Heart right ventricle (tissue), 16 donors: ENCODE measurements at regions of chr6 and their contacts with region 1.

Region 1: DNA sequence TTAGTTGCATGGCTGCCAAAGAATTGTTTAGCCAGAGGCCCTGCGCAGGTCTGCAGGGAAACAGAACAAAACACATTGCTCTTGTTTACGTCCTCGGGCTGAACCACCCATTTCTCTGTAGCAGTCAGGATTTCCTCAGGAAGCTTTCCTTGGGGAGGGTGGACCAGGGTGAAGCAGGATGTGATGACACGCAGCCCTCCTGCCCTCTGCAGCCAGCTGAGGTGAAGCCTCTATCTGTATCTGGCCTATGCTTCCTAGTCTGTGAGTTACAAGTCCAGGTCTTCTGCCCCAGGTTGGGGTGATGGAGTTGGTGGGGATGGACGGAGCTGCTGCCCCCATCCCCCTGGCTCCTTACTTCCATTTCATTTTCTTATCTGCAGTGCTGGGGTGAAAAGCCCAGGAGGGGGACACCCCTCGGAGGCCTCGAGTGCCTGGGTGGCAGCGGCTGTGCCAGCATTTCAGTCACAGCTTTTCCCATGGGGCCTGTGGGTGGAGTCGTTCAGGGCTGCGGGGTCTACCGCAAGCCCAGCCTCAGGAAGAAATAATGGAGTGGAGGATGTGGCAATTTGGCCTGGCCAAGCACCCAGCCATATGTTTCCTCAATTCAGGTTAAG is 24.9 kb downstream of the SASH1 start:
- DNase-seq: peak; percentile 61 to 85
- ATAC-seq: peak; percentile 83 to 95 (median 93)
- H3K4me3 ChIP-seq: peak overlapping the region in 1 of 10 donors; percentile 4
- H3K27ac ChIP-seq: peak overlapping the region; percentile 73 to 94 (median 86)
- H3K4me1 ChIP-seq: peaks cover 5 to 100% (median 69%) of the 10 kb centered on the region in 9 donors
- H3K27me3 ChIP-seq: no peaks in the 10 kb centered on the region
- CTCF ChIP-seq: peak in 1 of 9 donors; percentile 16

Region 2: DNA sequence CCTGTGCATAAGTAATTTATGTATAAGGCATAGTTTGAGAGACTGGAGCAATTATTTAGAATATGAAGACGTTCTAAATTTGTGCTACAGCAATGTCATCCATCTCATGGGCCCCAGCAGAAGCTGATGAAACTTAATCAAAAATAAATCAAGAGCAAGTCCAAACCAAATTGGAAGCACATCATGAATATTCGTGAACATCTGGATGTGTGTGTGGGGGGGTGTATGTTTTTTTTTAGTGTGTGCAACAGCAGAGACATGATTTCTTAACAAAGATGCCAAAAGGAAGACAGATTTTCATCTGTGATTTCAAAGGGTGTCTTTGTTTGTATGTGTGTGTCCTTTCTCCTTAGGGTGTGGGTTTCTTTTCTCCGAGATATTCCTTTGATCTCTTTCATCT is 34.1 kb after region 1 on chr6:
- intact Hi-C with region 1: loop called in 1 of 10 experiments (anchors 5 kb)
- DNase-seq: no peak
- ATAC-seq: no peak
- H3K4me3 ChIP-seq: no peak overlapping the region
- H3K27ac ChIP-seq: peak overlapping the region in 4 of 10 donors; percentile 8 to 85 (median 26)
- H3K4me1 ChIP-seq: peaks cover 13 to 91% (median 49%) of the 10 kb centered on the region in 9 donors
- H3K27me3 ChIP-seq: no peaks in the 10 kb centered on the region
- CTCF ChIP-seq: no peak

Region 3: DNA sequence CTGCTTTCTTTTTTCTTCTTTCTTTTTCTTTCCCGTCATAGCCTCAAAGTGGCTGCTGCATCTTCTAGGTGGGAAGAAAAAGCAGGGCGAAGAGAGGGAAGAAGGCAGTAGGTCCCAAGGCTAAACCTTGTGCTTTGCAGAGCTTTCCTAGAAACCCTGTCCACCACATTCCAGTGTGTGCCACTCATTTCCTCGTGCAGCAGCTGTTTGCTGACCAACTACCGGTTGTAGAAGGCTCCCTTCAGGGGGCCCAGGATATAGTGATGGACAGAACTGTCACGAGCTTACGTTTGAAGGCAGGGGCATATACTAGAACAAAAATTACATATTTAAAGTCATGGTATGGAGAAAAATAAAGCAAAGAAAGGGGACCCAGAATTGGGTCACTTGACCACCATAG is 78.1 kb after region 1 on chr6:
- intact Hi-C with region 1: loop called in 1 of 10 experiments (anchors 5 kb)
- DNase-seq: no peak
- ATAC-seq: no peak
- H3K4me3 ChIP-seq: no peak overlapping the region
- H3K27ac ChIP-seq: peak overlapping the region in 1 of 10 donors; percentile 13
- H3K4me1 ChIP-seq: peaks cover 0 to 54% (median 17%) of the 10 kb centered on the region in 9 donors
- H3K27me3 ChIP-seq: no peaks in the 10 kb centered on the region
- CTCF ChIP-seq: no peak